Panc1 (cell line): ENCODE measurements at regions of chr21 and their contacts with region 1.

Region 1: DNA sequence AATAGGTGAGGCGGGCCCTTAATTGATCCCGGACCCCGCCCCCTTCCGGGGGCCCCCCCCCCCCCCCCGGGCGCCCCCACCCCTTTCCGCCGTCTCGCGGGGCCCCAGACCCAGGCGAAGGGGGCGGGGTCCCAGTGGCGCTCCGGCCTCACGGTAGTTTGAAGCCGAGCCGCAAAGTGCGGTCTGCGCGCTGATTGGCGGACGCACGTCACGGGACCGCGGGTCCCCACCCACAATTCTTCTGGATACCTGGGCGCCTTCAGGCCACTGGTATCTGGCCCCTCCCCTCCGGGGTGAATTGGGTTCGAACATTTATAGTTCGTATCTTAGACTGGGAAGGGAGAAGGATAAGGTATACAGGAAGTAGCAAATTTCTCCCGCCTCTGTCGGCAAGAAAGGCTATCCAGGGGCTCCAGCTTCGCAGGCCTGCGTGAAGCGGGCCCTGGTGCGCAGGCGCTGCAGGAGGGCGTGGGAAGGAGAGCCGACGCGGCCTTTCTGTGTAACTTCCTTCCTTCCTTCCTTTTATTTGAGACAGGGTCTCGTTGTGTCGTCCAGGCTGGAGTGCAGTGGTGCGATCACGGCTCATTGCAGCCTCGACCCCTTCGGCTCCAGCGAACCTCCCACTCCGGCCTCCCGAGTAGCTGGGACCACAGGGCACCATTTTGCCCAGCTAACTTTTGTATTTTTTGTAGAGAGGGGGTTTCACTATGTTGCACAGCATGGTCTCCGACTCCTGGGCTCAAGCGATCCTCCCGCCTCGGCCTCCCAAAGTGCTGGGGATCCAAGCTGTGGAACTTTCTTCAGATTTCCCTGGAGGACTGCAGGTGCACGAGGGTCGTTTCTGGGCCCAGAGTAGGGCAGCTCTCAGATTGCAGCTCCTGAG is 564 bp upstream of the HMGN1 start:
- DNase-seq: peak; percentile 71
- ATAC-seq: peak; percentile 92
- H3K4me3 ChIP-seq: peak overlapping the region; percentile 53 to 79
- H3K27ac ChIP-seq: peak overlapping the region; percentile 82
- H3K4me1 ChIP-seq: peaks cover 9% of the 10 kb centered on the region
- H3K27me3 ChIP-seq: no peaks in the 10 kb centered on the region
- CTCF ChIP-seq: no peak

Region 2: GRCh38 chr21:39221282-39221996 is 128.0 kb before region 1 on chr21:
- CTCF ChIA-PET with region 1: no interaction called
- POLR2A ChIA-PET with region 1: no interaction called
- in situ Hi-C with region 1: no loop called
- intact Hi-C with region 1: no loop called
- DNase-seq: no peak
- ATAC-seq: no peak
- H3K4me3 ChIP-seq: no peak overlapping the region
- H3K27ac ChIP-seq: no peak overlapping the region
- H3K4me1 ChIP-seq: no peaks in the 10 kb centered on the region
- H3K27me3 ChIP-seq: no peaks in the 10 kb centered on the region
- CTCF ChIP-seq: no peak

Region 3: DNA sequence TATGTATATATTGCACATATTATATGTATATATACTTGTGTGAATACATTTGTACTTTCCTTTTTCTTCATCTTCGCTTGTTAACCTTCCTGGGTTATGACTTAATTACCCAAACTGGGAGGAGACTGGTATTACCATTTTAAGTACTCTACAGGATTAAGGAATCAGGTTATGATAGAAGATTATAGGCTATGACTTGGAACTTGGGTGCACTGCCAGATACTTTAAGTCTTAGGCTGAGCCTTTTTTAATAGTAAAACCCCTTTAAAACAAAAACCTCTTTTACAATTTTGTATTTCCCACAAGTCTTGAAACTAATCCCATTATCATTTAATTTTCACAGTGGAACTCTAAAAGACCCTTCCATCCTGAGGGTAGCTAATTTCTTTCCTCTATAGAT is 42.0 kb before region 1 on chr21:
- CTCF ChIA-PET with region 1: no interaction called
- POLR2A ChIA-PET with region 1: interaction called, 10 read pairs
- in situ Hi-C with region 1: no loop called
- intact Hi-C with region 1: no loop called
- DNase-seq: no peak
- ATAC-seq: no peak
- H3K4me3 ChIP-seq: no peak overlapping the region
- H3K27ac ChIP-seq: no peak overlapping the region
- H3K4me1 ChIP-seq: peaks cover 6% of the 10 kb centered on the region
- H3K27me3 ChIP-seq: no peaks in the 10 kb centered on the region
- CTCF ChIP-seq: no peak